AG04449 (cell line): ENCODE measurements at regions of chr19 and their contacts with region 1.

Region 1: DNA sequence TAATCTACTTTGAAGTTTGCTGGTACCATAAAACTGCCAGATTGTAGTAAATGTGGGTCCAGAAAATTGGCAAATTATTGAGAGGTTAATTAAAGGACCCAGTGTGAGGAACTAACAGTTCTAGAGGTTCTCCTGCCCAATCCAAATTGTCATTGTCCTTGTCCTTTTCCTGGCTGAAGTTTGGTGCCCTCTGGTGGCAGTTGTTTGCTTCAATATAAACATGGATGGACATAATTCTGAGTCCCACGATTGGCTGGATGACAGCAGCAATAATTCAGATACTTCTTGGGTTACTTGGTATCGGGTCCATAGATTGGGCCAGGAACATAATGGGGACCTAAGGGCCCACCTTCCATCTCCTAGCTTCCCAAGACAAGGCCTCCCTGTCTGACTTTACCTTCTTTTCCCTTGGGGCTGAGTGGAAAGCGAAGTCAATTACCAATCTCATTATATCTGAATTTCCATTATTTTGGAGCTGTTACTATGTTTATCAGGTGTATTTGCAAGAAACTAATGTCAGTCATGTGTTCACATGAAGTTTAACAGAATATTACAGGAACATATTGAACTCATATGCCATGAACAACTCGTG is 33.8 kb upstream of the GARRE1 start:
- DNase-seq: no peak
- H3K4me3 ChIP-seq: no peak overlapping the region
- CTCF ChIP-seq: peak; percentile 60

Region 2: GRCh38 chr19:34035626-34036025 is 184.9 kb before region 1 on chr19:
- CTCF ChIA-PET with region 1: no interaction called
- POLR2A ChIA-PET with region 1: no interaction called
- DNase-seq: no peak
- H3K4me3 ChIP-seq: no peak overlapping the region
- CTCF ChIP-seq: no peak

Region 3: DNA sequence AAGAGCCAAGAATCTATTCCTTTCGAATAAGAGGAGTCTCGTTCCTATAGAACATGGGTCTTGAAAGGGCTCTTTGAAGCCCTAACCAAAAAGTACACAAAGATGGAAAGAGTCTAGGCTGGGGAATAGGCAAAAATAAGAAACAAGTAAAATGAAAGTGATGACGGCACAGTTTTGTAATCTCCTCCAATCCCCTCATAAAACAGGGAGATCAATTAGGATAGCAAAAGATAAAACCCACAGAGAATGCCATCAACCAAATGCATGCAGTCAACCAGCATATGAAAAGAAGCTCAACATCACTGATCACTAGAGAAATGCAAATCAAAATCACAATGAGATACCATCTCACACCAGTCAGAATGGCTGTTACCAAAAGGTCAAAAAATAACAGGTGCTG is 170.6 kb before region 1 on chr19:
- CTCF ChIA-PET with region 1: no interaction called
- POLR2A ChIA-PET with region 1: no interaction called
- DNase-seq: no peak
- H3K4me3 ChIP-seq: no peak overlapping the region
- CTCF ChIP-seq: no peak

Region 4: DNA sequence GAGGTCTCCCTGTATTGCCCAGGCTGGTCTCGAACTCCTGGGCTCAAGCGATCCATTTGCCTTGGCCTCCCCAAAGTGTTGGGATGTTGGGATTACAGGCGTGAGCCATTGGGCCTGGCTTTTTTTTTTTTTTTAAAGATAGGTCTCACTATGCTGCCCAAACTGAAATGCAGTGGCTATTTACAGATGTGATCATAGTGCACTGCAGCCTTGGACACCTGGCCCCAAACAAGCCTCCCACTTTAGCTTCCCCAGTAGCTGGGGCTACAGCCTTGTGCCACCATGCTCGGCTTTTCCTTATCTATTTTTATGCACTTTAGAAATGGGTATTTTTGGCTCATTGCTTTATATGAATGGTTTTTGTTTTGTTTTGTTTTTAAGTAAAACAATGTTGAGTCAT is 10.8 kb before region 1 on chr19:
- CTCF ChIA-PET with region 1: interaction called, 15 read pairs
- POLR2A ChIA-PET with region 1: no interaction called
- DNase-seq: no peak
- H3K4me3 ChIP-seq: no peak overlapping the region
- CTCF ChIP-seq: no peak

Region 5: DNA sequence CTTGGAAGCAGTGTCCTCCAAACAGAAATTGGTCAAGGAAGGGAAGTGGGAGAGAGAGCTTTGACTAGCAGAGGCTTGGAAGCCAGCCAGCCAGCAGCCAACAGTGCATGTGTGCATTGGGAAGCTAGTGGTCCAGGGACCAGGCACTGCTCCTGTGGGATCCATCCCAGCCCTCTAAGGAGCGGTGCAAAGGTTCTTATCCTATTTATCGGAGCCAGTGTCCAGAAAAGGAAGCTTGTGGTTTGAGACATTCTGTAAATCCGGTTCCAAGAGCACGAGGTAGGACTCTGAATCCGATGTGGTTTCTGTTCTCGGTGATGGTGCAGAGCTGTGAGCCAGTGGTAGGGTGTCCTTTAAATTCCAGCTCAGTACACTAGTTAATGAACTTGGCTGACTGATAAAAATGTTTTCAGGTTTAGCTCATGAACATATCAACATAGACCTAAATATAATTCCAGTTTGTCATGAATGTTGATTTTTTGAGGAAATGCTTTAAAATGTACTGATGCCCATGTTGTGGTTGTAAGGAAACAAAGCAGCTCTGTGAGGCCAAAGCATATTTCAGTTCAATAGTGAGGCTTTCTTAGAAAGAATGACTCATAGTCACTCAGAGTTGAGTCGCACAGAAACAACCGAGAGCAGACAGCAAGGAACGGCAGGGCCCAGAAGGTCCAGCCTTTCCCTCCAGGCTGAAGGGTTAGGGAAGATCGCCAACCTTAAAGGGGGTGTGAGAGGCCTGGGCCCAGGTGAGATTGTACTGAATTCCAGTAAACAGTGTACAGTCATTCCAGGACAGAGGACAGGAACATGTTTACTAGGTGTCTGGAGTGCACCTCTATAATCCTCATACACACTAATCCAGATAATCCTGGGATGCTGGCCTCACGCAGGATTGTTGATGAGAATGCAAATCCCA is 12.3 kb after region 1 on chr19:
- CTCF ChIA-PET with region 1: interaction called, 63 read pairs
- POLR2A ChIA-PET with region 1: interaction called, 8 read pairs
- DNase-seq: peak; percentile 91
- H3K4me3 ChIP-seq: 0 out of 2 replicates have a peak overlapping the region, but pooled peaks have one; percentile 26
- CTCF ChIP-seq: no peak

Region 6: GRCh38 chr19:34336781-34337271 is 116.3 kb after region 1 on chr19:
- CTCF ChIA-PET with region 1: interaction called, 10 read pairs
- POLR2A ChIA-PET with region 1: no interaction called
- DNase-seq: no peak
- H3K4me3 ChIP-seq: no peak overlapping the region
- CTCF ChIP-seq: peak; percentile 36

Region 7: DNA sequence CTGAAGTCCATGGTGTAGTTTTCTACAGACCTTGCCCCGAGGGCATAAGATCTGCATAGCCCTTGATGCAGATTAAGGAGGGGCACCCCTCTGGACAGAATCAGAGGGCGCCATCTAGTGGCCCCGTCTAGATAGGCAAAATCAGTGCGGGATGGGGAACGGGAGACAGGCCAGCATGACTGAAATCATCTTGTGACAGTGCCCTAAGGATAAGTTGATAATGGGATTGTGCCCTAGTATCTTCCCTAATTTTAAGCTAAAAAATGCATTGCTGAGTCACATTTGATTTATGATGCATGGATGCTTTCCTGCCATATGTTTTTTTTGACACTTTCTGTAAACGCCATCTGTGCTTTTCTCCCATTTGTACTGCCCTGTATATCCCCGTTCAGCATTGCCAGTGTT is 125.4 kb after region 1 on chr19:
- CTCF ChIA-PET with region 1: interaction called, 20 read pairs
- POLR2A ChIA-PET with region 1: no interaction called
- DNase-seq: no peak
- H3K4me3 ChIP-seq: no peak overlapping the region
- CTCF ChIP-seq: peak; percentile 82

Region 8: DNA sequence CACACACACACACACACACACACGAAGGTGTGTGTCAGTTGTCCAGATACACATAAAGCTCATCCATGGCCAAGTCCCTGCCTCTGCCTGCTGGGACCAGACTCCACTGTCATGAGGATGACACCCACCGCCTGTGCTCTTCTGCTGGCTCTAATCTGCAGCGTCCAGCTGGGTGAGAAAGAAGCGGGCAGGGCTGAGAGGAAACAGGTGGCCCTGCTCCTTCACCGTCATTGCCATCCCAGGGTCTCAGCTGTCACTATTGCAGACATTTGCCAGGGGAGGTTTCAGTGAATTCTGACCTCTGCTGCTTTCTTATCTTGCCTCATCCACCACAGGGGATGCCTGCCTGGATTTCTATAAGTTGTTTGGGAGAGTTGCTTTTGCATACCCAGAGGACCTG is 425.0 kb after region 1 on chr19:
- CTCF ChIA-PET with region 1: no interaction called
- POLR2A ChIA-PET with region 1: no interaction called
- DNase-seq: no peak
- H3K4me3 ChIP-seq: no peak overlapping the region
- CTCF ChIP-seq: no peak